GM12878 (cell line): ENCODE measurements at regions of chrX and their contacts with region 1.

Region 1: GRCh38 chrX:46325312-46325877 is 219.8 kb downstream of the ZNF674 start:
- DNase-seq: no peak
- ATAC-seq: no peak
- H3K4me3 ChIP-seq: no peak overlapping the region
- H3K27ac ChIP-seq: no peak overlapping the region
- H3K4me1 ChIP-seq: no peaks in the 10 kb centered on the region
- H3K27me3 ChIP-seq: no peaks in the 10 kb centered on the region
- CTCF ChIP-seq: no peak
- EP300 ChIP-seq: no peak
- POLR2A ChIP-seq: no peak
- RAD21 ChIP-seq: no peak

Region 2: GRCh38 chrX:46310815-46311497 is 14.4 kb before region 1 on chrX:
- CTCF ChIA-PET with region 1: no interaction called
- POLR2A ChIA-PET with region 1: interaction called, 10 read pairs
- RAD21 ChIA-PET with region 1: no interaction called
- SMC1A ChIA-PET with region 1: no interaction called
- in situ Hi-C with region 1: no loop called
- intact Hi-C with region 1: no loop called
- DNase-seq: no peak
- ATAC-seq: 0 out of 3 replicates have a peak, but pooled peaks have one; percentile 24
- H3K4me3 ChIP-seq: no peak overlapping the region
- H3K27ac ChIP-seq: no peak overlapping the region
- H3K4me1 ChIP-seq: no peaks in the 10 kb centered on the region
- H3K27me3 ChIP-seq: no peaks in the 10 kb centered on the region
- CTCF ChIP-seq: no peak
- EP300 ChIP-seq: no peak
- POLR2A ChIP-seq: no peak
- RAD21 ChIP-seq: no peak

Region 3: DNA sequence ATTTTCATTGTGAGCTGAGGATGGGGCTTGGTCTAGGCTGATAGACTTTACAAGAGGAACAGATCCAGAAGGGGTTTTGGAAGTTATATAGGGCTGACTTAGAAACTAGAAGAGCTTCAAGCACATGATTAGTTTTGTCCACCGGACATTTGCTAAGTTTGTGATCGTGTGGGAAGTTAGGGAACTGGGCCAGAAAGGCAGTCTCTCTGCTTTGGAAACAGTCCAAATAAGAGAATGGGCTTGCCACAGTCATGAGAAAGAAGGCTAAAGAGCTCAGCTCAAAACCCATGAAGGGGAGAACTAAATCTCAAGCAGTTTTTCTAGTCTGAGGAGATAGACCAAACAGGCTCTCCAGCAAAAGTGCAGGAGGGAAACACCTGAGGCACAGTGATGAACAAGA is 152.0 kb after region 1 on chrX:
- CTCF ChIA-PET with region 1: no interaction called
- POLR2A ChIA-PET with region 1: no interaction called
- RAD21 ChIA-PET with region 1: no interaction called
- SMC1A ChIA-PET with region 1: no interaction called
- in situ Hi-C with region 1: no loop called
- intact Hi-C with region 1: no loop called
- DNase-seq: no peak
- ATAC-seq: no peak
- H3K4me3 ChIP-seq: no peak overlapping the region
- H3K27ac ChIP-seq: no peak overlapping the region
- H3K4me1 ChIP-seq: no peaks in the 10 kb centered on the region
- H3K27me3 ChIP-seq: no peaks in the 10 kb centered on the region
- CTCF ChIP-seq: no peak
- EP300 ChIP-seq: no peak
- POLR2A ChIP-seq: no peak
- RAD21 ChIP-seq: no peak